ENCODE measurements at regions of chr10 and their contacts with region 1.

Region 1: GRCh38 chr10:27410152-27410551 is 94.0 kb upstream of the RAB18 start:
- DNase-seq: no peak
- H3K27ac ChIP-seq: no peak overlapping the region
- CTCF ChIP-seq: no peak

Region 2: GRCh38 chr10:27241652-27242472 is 168.3 kb before region 1 on chr10:
- CTCF ChIA-PET with region 1: no interaction called
- POLR2A ChIA-PET with region 1: no interaction called
- DNase-seq: peak; percentile 81
- H3K27ac ChIP-seq: peak overlapping the region; percentile 97
- CTCF ChIP-seq: peak; percentile 31

Region 3: GRCh38 chr10:27446091-27446918 is 36.2 kb after region 1 on chr10:
- CTCF ChIA-PET with region 1: interaction called, 11 read pairs
- POLR2A ChIA-PET with region 1: no interaction called
- DNase-seq: peak; percentile 30
- H3K27ac ChIP-seq: no peak overlapping the region
- CTCF ChIP-seq: peak; percentile 66

Region 4: GRCh38 chr10:27494116-27494805 is 84.1 kb after region 1 on chr10:
- CTCF ChIA-PET with region 1: no interaction called
- POLR2A ChIA-PET with region 1: no interaction called
- DNase-seq: no peak
- H3K27ac ChIP-seq: no peak overlapping the region
- CTCF ChIP-seq: no peak

Measured in RWPE1 (cell line).